ENCODE measurements at regions of chr21 and their contacts with region 1.

Region 1: DNA sequence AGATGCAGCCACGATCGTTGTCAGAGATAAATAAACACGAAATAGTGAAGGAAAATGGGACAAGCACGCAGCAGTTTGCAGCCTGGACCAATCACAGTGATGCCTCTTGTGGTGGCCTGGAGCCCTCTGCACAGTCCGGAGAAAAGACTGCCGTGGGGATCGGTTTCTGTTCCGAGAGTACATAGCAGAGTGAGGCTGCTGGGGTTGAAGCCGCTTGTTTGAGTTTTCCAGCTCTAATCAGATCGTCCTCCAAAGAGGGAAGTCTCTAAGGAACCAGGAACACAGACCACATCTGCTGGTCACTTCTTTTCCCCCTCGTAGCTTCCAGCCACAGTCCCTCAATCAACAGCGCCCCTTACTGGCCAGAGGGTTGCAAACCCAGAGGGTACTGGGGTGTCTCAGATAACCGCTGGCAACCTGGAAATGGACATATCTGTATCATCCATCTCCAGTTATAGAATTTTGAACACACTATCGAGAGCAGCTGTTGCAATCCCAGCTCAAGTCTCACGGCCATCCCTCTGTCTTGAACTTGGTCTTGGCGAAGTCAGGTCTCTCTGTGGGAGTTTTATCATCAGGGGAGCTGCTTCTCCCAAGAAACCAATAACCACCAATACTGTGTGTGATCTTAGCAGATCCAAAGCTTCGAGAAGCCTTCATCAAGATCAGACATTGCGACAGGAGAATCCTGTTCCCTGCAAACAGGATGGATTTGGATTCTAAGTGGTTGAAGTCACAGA is 57.4 kb downstream of the OLIG1 start:
- DNase-seq: no peak
- H3K4me3 ChIP-seq: peak overlapping the region; percentile 43
- CTCF ChIP-seq: peak; percentile 81

Region 2: DNA sequence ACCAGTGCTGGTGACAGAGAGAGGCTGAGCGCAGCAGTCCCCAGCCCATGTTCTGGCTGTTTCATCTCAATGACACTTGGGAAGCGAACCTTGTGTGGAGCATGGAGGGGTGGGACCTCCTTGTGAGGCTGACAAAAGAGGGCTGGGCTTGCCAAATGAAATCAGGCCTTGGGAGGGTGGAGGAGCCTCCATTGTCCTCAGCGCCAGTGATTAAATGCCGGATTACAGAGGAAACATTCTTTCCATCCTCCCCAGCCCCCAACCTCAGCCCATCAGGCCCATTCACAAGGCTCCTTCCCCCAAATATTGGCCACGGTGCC is 292.4 kb before region 1 on chr21:
- CTCF ChIA-PET with region 1: interaction called, 22 read pairs
- POLR2A ChIA-PET with region 1: no interaction called
- DNase-seq: no peak
- H3K4me3 ChIP-seq: no peak overlapping the region
- CTCF ChIP-seq: no peak